ENCODE measurements at regions of chr12 and their contacts with region 1.

Region 1: GRCh38 chr12:56636675-56637540 is 6.8 kb upstream of the BAZ2A start:
- DNase-seq: peak; percentile 99
- ATAC-seq: peak; percentile 70
- H3K4me3 Mint-ChIP-seq: peak overlapping the region; percentile 97
- H3K27ac Mint-ChIP-seq: peak overlapping the region; percentile 99
- H3K4me1 Mint-ChIP-seq: peaks cover 42% of the 10 kb centered on the region
- H3K27me3 Mint-ChIP-seq: no peaks in the 10 kb centered on the region
- CTCF ChIP-seq: peak; percentile 41; the same call in 1 of the 2 replicates

Region 2: DNA sequence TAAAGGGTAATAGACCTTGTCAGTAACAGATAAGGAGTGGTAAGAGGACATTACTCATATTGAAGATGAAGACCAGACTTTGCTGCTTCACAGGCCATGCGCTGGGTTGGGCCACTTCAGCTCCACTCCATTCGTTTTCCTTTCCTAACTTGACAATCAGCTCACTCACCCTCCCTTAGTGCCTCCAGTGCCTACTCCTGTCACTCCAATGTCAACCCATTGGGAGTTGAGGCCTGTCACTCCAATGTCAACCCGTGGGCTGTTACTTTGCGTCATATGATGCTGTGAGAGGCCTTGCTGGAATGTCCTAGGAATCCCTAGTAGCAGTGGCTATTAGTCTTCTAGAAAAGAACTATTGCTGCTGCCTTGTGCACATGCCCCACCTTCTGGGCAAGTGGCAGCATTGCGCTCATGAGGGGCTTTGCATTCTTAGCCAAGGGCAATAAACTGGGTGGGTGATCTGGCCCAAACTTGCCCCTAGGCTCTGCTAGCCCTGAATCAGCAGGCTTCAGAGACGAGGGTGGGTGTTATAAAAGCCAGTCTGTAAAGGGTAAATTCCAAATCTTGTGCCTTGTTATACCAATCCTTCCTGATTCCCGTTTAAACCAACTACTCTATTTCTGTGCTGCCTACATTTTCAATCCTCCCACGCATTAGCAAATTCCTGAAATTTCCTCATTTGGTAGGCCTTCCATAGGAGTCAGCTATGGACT is 42.8 kb before region 1 on chr12:
- CTCF ChIA-PET with region 1: interaction called, 30 read pairs
- POLR2A ChIA-PET with region 1: interaction called, 3 read pairs
- DNase-seq: peak; percentile 83
- ATAC-seq: peak; percentile 83
- H3K4me3 Mint-ChIP-seq: no peak overlapping the region
- H3K27ac Mint-ChIP-seq: peak overlapping the region; percentile 97
- H3K4me1 Mint-ChIP-seq: peaks cover 35% of the 10 kb centered on the region
- H3K27me3 Mint-ChIP-seq: no peaks in the 10 kb centered on the region
- CTCF ChIP-seq: peak; percentile 63; the same call in 1 of the 2 replicates

Region 3: DNA sequence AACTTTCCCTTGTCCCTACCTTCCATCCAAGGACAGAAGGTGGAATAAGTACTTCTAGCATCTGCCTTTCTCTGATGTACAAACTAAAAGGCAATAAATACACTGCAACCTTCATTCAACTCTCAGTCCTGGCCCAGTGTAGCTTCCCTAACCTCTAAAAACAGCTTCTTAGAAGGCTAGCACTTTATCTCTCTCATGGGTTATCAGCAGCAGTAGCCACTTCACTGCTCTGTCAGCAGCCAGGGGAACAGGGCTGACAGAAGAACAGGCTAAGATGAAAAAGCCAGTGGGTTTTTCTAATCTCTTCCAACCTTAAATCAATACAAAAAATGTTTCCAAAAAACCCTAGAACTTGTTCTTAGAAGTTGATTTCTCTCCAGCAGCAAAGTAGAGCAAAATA is 20.0 kb before region 1 on chr12:
- CTCF ChIA-PET with region 1: interaction called, 84 read pairs
- POLR2A ChIA-PET with region 1: interaction called, 4 read pairs
- DNase-seq: no peak
- ATAC-seq: no peak
- H3K4me3 Mint-ChIP-seq: no peak overlapping the region
- H3K27ac Mint-ChIP-seq: peak overlapping the region; percentile 40; the same call in 1 of the 2 replicates
- H3K4me1 Mint-ChIP-seq: no peaks in the 10 kb centered on the region
- H3K27me3 Mint-ChIP-seq: no peaks in the 10 kb centered on the region
- CTCF ChIP-seq: no peak

Region 4: GRCh38 chr12:56661560-56661959 is 24.7 kb after region 1 on chr12:
- CTCF ChIA-PET with region 1: interaction called, 12 read pairs
- POLR2A ChIA-PET with region 1: interaction called, 3 read pairs
- DNase-seq: no peak
- ATAC-seq: no peak
- H3K4me3 Mint-ChIP-seq: no peak overlapping the region
- H3K27ac Mint-ChIP-seq: 0 out of 2 replicates have a peak overlapping the region, but pooled peaks have one; percentile 70
- H3K4me1 Mint-ChIP-seq: no peaks in the 10 kb centered on the region
- H3K27me3 Mint-ChIP-seq: no peaks in the 10 kb centered on the region
- CTCF ChIP-seq: no peak

Region 5: GRCh38 chr12:56688129-56688845 is 51.4 kb after region 1 on chr12 and contains the start of gene PTGES3:
- CTCF ChIA-PET with region 1: interaction called, 27 read pairs
- POLR2A ChIA-PET with region 1: interaction called, 14 read pairs
- DNase-seq: peak; percentile 99
- ATAC-seq: peak; percentile 80
- H3K4me3 Mint-ChIP-seq: peak within 1 kb of the TSS; percentile 99
- H3K27ac Mint-ChIP-seq: peak within 1 kb of the TSS; percentile 98
- H3K4me1 Mint-ChIP-seq: peaks cover 17% of the 10 kb centered on the region
- H3K27me3 Mint-ChIP-seq: no peaks in the 10 kb centered on the region; the same call in 1 of the 2 replicates
- CTCF ChIP-seq: no peak
- total RNA-seq, gene PTGES3: 394 to 436 TPM (median 420 TPM) in 3 replicates

Region 6: DNA sequence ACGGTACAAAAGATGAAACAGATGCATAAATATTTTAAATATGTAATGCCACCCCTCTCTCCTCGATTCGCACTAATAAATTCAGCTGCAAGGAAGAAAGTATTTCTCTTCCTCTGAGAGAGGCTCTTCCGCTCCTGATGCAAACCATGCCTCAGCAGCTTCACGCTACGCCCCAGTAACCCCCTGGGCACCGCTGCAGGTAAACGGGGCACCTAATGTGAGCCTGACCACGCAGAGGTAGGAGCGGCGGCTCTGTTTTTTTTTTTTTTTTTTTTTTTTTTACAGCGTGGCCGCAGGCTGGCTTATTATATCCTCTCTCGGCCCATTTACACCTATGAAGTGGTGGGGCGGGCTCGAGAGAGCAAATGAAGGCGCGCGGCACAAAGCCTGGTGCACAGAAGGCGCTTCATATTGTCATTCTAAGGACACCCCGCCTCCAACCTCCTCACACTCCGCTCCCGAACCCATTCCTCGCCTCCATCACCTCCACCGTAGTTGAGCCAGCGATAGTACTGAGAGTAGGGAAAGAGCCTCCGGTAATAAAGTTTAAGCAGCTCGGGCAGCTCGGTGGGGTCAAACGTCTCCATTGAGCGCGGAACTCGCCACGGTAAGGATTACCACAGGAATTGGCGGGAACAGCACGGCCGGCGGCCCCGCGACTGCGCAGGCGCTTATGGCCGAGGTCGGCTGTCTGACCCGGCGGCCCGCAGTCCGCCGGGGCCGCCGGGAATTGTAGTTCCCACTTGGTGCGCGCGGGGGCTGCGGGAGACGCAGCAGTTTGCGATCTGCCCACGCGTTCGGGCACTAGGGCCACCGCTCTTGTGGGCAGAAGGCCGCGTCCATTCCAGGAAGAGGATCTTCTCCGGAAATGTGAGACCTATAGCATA is 115.0 kb after region 1 on chr12 and contains the start of gene PRIM1:
- CTCF ChIA-PET with region 1: interaction called, 15 read pairs
- POLR2A ChIA-PET with region 1: no interaction called
- DNase-seq: peak; percentile 89
- ATAC-seq: peak; percentile 86
- H3K4me3 Mint-ChIP-seq: peak within 1 kb of the TSS; percentile 92
- H3K27ac Mint-ChIP-seq: peak within 1 kb of the TSS; percentile 98
- H3K4me1 Mint-ChIP-seq: peaks cover 17% of the 10 kb centered on the region
- H3K27me3 Mint-ChIP-seq: peaks cover 2% of the 10 kb centered on the region; the same call in 1 of the 2 replicates
- CTCF ChIP-seq: no peak
- total RNA-seq, gene PRIM1: 51.7 to 54.5 TPM (median 54.0 TPM) in 3 replicates

Measured in WTC11 (cell line).